GM12878 (cell line): ENCODE measurements at regions of chr10 and their contacts with region 1.

Region 1: GRCh38 chr10:69186524-69186923 is 6.5 kb downstream of the SUPV3L1 start:
- DNase-seq: no peak
- ATAC-seq: no peak
- H3K4me3 ChIP-seq: no peak overlapping the region
- H3K27ac ChIP-seq: no peak overlapping the region
- H3K4me1 ChIP-seq: no peaks in the 10 kb centered on the region
- H3K27me3 ChIP-seq: no peaks in the 10 kb centered on the region
- CTCF ChIP-seq: no peak
- EP300 ChIP-seq: no peak
- POLR2A ChIP-seq: no peak
- RAD21 ChIP-seq: no peak

Region 2: DNA sequence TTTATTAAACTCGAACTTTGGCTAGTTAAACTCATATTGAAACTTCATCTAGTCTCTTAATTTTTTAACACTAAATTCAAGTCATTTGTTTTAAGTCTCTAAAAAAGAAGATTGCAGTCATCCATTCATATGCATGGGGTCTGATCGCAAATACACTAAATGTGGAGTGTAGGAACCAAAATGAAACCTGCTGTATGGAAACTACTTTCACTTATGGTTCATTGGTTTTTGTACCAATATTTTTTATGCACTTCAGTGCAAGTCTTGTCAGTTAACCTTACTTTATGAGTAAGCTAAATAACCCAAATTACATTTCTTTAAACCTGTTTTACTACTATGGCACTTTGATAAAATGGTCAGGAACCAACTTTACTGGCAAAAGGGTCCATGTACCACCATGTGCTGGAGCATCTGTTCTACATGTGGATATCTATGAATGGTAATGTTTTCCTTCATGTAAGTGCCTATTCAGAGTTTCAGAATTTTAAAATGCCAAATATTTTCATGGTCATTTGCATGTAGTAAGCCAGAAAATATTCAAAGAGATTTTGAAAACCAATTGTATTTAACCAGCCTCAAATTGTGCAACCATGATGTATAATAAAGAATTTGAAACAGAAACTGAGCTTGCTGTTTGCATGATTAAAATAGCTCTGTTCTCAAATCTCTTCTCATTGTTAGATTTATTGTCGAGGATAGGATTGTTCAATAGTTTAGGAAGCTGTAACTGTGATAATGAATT is 14.1 kb before region 1 on chr10:
- CTCF ChIA-PET with region 1: no interaction called
- POLR2A ChIA-PET with region 1: interaction called, 6 read pairs
- RAD21 ChIA-PET with region 1: no interaction called
- SMC1A ChIA-PET with region 1: interaction called, 10 read pairs
- in situ Hi-C with region 1: no loop called
- intact Hi-C with region 1: no loop called
- DNase-seq: no peak
- ATAC-seq: peak; percentile 62
- H3K4me3 ChIP-seq: peak overlapping the region; percentile 9; the same call in 1 of the 2 replicates
- H3K27ac ChIP-seq: peak overlapping the region; percentile 16; the same call in 1 of the 2 replicates
- H3K4me1 ChIP-seq: peaks cover 6% of the 10 kb centered on the region; the same call in 1 of the 2 replicates
- H3K27me3 ChIP-seq: no peaks in the 10 kb centered on the region
- CTCF ChIP-seq: no peak
- EP300 ChIP-seq: no peak
- POLR2A ChIP-seq: no peak
- RAD21 ChIP-seq: no peak